ENCODE measurements at regions of chr18 and their contacts with region 1.

Region 1: DNA sequence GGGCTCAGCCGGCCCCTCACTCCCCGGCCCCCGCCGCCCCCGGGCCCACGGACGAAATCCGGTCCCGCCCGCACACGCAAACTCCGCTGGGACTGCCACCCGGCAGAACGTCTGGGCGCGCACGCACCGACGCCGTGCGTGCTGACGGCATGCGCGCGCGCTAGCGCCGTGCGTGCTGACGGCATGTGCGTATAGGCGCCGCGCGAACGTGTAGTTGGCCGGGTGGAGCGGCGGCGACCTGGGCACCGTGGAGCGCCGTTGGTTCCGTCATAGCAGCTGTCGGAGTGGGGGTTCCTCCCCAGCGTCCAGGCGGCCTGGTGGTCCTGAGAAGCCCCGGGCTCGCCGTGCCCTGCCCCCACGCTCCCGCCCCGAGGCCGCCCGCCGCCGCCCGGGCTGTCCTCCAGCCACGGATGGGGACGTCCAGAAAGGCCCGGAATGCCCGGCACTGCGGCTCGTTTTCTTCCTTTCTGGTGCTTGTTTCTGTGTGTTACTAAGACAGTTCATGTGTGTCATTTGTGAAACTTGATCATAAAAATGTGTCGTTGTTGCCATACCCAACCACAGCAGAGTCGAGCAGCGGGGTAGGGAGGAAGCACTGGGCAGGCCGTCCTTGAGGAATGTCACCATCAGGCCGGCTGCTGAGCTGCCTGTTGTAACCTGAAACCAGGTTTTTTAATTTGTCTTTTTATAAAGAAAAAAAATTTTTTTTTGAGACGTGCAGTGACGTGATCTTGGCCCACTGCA is at the start of gene TXNL4A:
- DNase-seq: peak; percentile 85
- H3K4me3 ChIP-seq: peak within 1 kb of the TSS; percentile 89
- H3K27ac ChIP-seq: peak within 1 kb of the TSS; percentile 85
- H3K4me1 ChIP-seq: peaks cover 14% of the 10 kb centered on the region
- H3K27me3 ChIP-seq: no peaks in the 10 kb centered on the region
- CTCF ChIP-seq: no peak
- total RNA-seq, gene TXNL4A: 101 to 138 TPM

Region 2: GRCh38 chr18:79887181-79888000 is 101.2 kb before region 1 on chr18:
- intact Hi-C with region 1: no loop called
- DNase-seq: no peak
- H3K4me3 ChIP-seq: no peak overlapping the region
- H3K27ac ChIP-seq: no peak overlapping the region
- H3K4me1 ChIP-seq: no peaks in the 10 kb centered on the region
- H3K27me3 ChIP-seq: no peaks in the 10 kb centered on the region
- CTCF ChIP-seq: no peak

Region 3: GRCh38 chr18:79933765-79934164 is 54.9 kb before region 1 on chr18:
- intact Hi-C with region 1: loop called (anchors 10 kb)
- DNase-seq: peak; percentile 76
- H3K4me3 ChIP-seq: no peak overlapping the region
- H3K27ac ChIP-seq: peak overlapping the region; percentile 70
- H3K4me1 ChIP-seq: peaks cover 17% of the 10 kb centered on the region
- H3K27me3 ChIP-seq: no peaks in the 10 kb centered on the region
- CTCF ChIP-seq: no peak

Measured in colonic mucosa (tissue), 4 donors.